ENCODE measurements at regions of chr18 and their contacts with region 1.

Region 1: DNA sequence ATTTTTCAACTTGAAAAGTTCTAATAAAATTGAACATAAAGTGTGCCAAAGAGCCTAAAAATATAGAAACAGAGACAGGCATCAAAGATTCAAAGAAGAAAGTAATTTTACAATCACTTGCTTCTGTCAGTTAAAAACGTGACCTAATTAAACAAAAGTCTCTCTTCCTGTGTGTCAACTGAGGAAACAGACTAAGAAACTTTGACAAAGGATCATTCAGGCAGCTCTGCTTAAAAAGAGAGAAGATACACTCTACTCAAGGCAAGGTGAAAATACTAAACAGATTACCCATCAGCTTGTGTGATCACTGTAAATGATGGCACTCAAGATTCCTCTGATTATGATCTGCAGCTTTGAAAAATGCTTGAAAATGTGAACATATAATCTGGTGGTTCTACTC is 47.8 kb downstream of the DYM start:
- DNase-seq: peak; percentile 35
- H3K4me3 ChIP-seq: no peak overlapping the region
- H3K27ac ChIP-seq: peak overlapping the region; percentile 56
- H3K4me1 ChIP-seq: peaks cover 18% of the 10 kb centered on the region
- H3K27me3 ChIP-seq: no peaks in the 10 kb centered on the region
- CTCF ChIP-seq: no peak
- POLR2A ChIP-seq: no peak

Region 2: GRCh38 chr18:48675352-48675761 is 737.3 kb before region 1 on chr18:
- CTCF ChIA-PET with region 1: interaction called, 10 read pairs
- POLR2A ChIA-PET with region 1: no interaction called
- dilution Hi-C with region 1: no loop called
- intact Hi-C with region 1: loop called (anchors 1 kb)
- DNase-seq: peak; percentile 82
- H3K4me3 ChIP-seq: no peak overlapping the region
- H3K27ac ChIP-seq: no peak overlapping the region
- H3K4me1 ChIP-seq: peaks cover 6% of the 10 kb centered on the region
- H3K27me3 ChIP-seq: no peaks in the 10 kb centered on the region
- CTCF ChIP-seq: peak; percentile 90 to 96
- POLR2A ChIP-seq: no peak

Region 3: GRCh38 chr18:49041435-49042245 is 371.0 kb before region 1 on chr18:
- CTCF ChIA-PET with region 1: interaction called, 5 read pairs
- POLR2A ChIA-PET with region 1: no interaction called
- dilution Hi-C with region 1: no loop called
- intact Hi-C with region 1: loop called (anchors 10 kb)
- DNase-seq: peak; percentile 52
- H3K4me3 ChIP-seq: no peak overlapping the region
- H3K27ac ChIP-seq: no peak overlapping the region
- H3K4me1 ChIP-seq: no peaks in the 10 kb centered on the region
- H3K27me3 ChIP-seq: no peaks in the 10 kb centered on the region
- CTCF ChIP-seq: peak; percentile 45 to 53
- POLR2A ChIP-seq: no peak

Region 4: GRCh38 chr18:49178736-49179135 is 233.9 kb before region 1 on chr18:
- CTCF ChIA-PET with region 1: no interaction called
- POLR2A ChIA-PET with region 1: no interaction called
- dilution Hi-C with region 1: no loop called
- intact Hi-C with region 1: loop called (anchors 5 kb)
- DNase-seq: peak; percentile 37
- H3K4me3 ChIP-seq: no peak overlapping the region
- H3K27ac ChIP-seq: no peak overlapping the region
- H3K4me1 ChIP-seq: peaks cover 18% of the 10 kb centered on the region
- H3K27me3 ChIP-seq: no peaks in the 10 kb centered on the region
- CTCF ChIP-seq: peak; percentile 44 to 48
- POLR2A ChIP-seq: no peak

Region 5: GRCh38 chr18:49342690-49343089 is 70.0 kb before region 1 on chr18:
- CTCF ChIA-PET with region 1: no interaction called
- POLR2A ChIA-PET with region 1: no interaction called
- dilution Hi-C with region 1: no loop called
- intact Hi-C with region 1: no loop called
- DNase-seq: no peak
- H3K4me3 ChIP-seq: no peak overlapping the region
- H3K27ac ChIP-seq: no peak overlapping the region
- H3K4me1 ChIP-seq: peaks cover 3% of the 10 kb centered on the region
- H3K27me3 ChIP-seq: no peaks in the 10 kb centered on the region
- CTCF ChIP-seq: no peak
- POLR2A ChIP-seq: no peak

Region 6: GRCh38 chr18:49368876-49369440 is 43.7 kb before region 1 on chr18:
- CTCF ChIA-PET with region 1: no interaction called
- POLR2A ChIA-PET with region 1: no interaction called
- dilution Hi-C with region 1: no loop called
- intact Hi-C with region 1: no loop called
- DNase-seq: no peak
- H3K4me3 ChIP-seq: no peak overlapping the region
- H3K27ac ChIP-seq: no peak overlapping the region
- H3K4me1 ChIP-seq: no peaks in the 10 kb centered on the region
- H3K27me3 ChIP-seq: no peaks in the 10 kb centered on the region
- CTCF ChIP-seq: no peak
- POLR2A ChIP-seq: no peak

Region 7: GRCh38 chr18:49431165-49431962 is 18.7 kb after region 1 on chr18:
- CTCF ChIA-PET with region 1: interaction called, 17 read pairs
- POLR2A ChIA-PET with region 1: no interaction called
- dilution Hi-C with region 1: no loop called
- intact Hi-C with region 1: no loop called
- DNase-seq: no peak
- H3K4me3 ChIP-seq: no peak overlapping the region
- H3K27ac ChIP-seq: no peak overlapping the region
- H3K4me1 ChIP-seq: peaks cover 6% of the 10 kb centered on the region
- H3K27me3 ChIP-seq: no peaks in the 10 kb centered on the region
- CTCF ChIP-seq: no peak
- POLR2A ChIP-seq: no peak

Measured in endothelial cell of umbilical vein (primary cell).